ENCODE measurements at regions of chr1 and their contacts with region 1.

Region 1: GRCh38 chr1:43073490-43074230 is 98.4 kb downstream of the EBNA1BP2 start:
- DNase-seq: peak; percentile 85
- ATAC-seq: peak; percentile 86
- H3K4me3 ChIP-seq: no peak overlapping the region
- H3K4me3 Mint-ChIP-seq: peak overlapping the region; percentile 71
- H3K27ac ChIP-seq: peak overlapping the region in 1 of 2 donors; percentile 11
- H3K27ac Mint-ChIP-seq: peak overlapping the region; percentile 83
- H3K4me1 ChIP-seq: peaks cover 18 to 19% of the 10 kb centered on the region in 2 donors
- H3K4me1 Mint-ChIP-seq: peaks cover 37% of the 10 kb centered on the region
- H3K27me3 ChIP-seq: peaks cover 0 to 2% (median 0%) of the 10 kb centered on the region in 4 experiments
- H3K27me3 Mint-ChIP-seq: no peaks in the 10 kb centered on the region
- CTCF ChIP-seq: peak; percentile 90

Region 2: DNA sequence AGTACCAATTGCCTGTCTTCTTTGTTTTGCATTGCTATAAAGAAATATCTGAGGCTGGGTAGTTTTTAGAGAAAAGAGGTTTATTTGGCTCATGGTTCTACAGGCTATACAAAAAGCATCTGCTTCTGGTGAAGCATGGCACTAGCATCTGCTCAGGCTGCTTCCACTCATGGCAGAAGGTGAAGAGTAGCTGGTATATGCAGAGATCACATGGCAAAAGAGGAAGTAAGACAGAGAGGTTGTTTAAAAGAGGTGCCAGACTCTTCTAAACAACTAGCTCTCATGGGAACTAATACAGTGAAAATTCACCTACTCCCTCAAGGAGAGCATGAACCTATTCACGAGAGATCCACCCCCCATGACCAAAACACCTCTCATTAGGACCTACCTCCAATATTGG is 977.1 kb before region 1 on chr1:
- CTCF ChIA-PET with region 1: no interaction called
- POLR2A ChIA-PET with region 1: no interaction called
- intact Hi-C with region 1: no loop called
- DNase-seq: no peak
- ATAC-seq: no peak
- H3K4me3 ChIP-seq: no peak overlapping the region
- H3K4me3 Mint-ChIP-seq: no peak overlapping the region
- H3K27ac ChIP-seq: no peak overlapping the region
- H3K27ac Mint-ChIP-seq: no peak overlapping the region
- H3K4me1 ChIP-seq: no peaks in the 10 kb centered on the region
- H3K4me1 Mint-ChIP-seq: no peaks in the 10 kb centered on the region
- H3K27me3 ChIP-seq: peaks cover 0 to 8% (median 2%) of the 10 kb centered on the region in 4 experiments
- H3K27me3 Mint-ChIP-seq: peaks cover 39% of the 10 kb centered on the region
- CTCF ChIP-seq: no peak

Region 3: DNA sequence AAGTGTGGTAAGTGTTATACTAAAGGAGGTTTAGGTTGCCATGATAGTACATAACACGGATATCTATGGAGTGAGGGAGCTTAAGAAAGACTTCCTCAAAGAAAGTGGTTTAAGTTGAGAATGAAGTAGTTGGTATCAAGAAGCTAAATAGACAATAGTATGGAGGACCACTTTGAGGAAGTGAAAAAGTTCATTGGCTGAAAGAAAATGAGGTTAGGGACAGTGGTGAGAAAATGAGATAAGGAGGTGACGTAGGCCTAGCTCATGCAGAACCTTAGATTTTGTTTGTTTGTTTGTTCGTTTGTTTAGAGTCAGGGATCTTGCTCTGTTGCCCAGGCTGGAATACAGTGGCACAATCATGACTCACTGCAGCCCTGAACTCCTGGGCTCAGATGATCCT is 487.6 kb before region 1 on chr1:
- CTCF ChIA-PET with region 1: interaction called, 11 read pairs
- POLR2A ChIA-PET with region 1: no interaction called
- intact Hi-C with region 1: no loop called
- DNase-seq: peak; percentile 25
- ATAC-seq: no peak
- H3K4me3 ChIP-seq: no peak overlapping the region
- H3K4me3 Mint-ChIP-seq: no peak overlapping the region
- H3K27ac ChIP-seq: no peak overlapping the region
- H3K27ac Mint-ChIP-seq: no peak overlapping the region
- H3K4me1 ChIP-seq: no peaks in the 10 kb centered on the region
- H3K4me1 Mint-ChIP-seq: peaks cover 3% of the 10 kb centered on the region
- H3K27me3 ChIP-seq: no peaks in the 10 kb centered on the region
- H3K27me3 Mint-ChIP-seq: no peaks in the 10 kb centered on the region
- CTCF ChIP-seq: no peak

Region 4: DNA sequence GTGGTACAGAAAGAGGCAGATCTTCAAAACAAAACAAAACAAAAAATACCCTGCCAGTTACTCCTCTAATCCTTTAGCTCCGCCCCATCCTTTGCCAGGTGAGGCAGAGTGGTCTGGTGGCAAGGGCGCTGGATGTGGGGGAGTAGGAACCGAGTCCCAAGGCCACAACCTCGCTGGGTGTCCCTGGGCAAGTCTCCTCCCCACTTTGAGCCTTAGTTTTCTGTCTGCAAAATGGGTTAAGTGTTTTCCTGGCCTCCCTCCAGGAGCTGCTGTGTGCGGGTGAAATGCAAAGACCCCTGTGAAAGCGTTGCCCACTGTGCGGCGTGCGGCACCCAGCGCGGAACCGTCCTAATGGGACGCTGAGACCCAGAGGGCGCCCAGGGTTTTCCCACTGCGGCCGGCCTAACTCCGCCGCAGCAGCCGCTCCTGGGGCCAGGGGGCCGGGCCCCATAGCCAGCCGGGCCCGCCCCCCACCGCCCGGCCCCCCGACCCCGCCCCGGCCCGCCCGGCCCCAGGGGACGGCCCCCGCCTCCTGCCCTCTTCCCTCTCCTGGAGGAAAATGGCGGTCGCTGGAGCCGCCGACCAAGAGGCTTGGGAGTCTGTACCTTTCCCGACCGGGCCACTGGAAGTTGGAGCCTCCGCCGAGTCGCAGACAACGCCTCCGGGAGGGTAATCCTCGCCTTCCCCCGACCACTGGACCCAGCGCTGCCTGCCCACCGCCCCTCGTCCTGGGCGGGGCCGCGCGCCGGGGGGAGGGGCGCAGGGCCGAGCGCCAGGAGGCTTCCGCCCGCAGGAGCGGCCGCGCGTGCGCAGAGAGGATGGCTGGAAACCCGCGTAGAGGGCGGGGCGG is 256.9 kb before region 1 on chr1 and contains the starts of genes ERMAP and SVBP:
- CTCF ChIA-PET with region 1: interaction called, 8 read pairs
- POLR2A ChIA-PET with region 1: interaction called, 4 read pairs
- intact Hi-C with region 1: loop called (anchors 2 kb)
- DNase-seq: peak; percentile 97
- ATAC-seq: peak; percentile 86
- H3K4me3 ChIP-seq: peak within 1 kb of the TSS; percentile 57 to 82 (median 77)
- H3K4me3 Mint-ChIP-seq: peak within 1 kb of the TSS; percentile 89
- H3K27ac ChIP-seq: peak within 1 kb of the TSS; percentile 75 to 82
- H3K27ac Mint-ChIP-seq: peak within 1 kb of the TSS; percentile 92
- H3K4me1 ChIP-seq: peaks cover 13% of the 10 kb centered on the region in 2 donors
- H3K4me1 Mint-ChIP-seq: peaks cover 20% of the 10 kb centered on the region
- H3K27me3 ChIP-seq: no peaks in the 10 kb centered on the region
- H3K27me3 Mint-ChIP-seq: no peaks in the 10 kb centered on the region
- CTCF ChIP-seq: no peak
- total RNA-seq, gene ERMAP: 13.1 and 13.5 TPM in 2 replicates
- total RNA-seq, gene SVBP: 21.9 and 23.2 TPM in 2 replicates

Region 5: DNA sequence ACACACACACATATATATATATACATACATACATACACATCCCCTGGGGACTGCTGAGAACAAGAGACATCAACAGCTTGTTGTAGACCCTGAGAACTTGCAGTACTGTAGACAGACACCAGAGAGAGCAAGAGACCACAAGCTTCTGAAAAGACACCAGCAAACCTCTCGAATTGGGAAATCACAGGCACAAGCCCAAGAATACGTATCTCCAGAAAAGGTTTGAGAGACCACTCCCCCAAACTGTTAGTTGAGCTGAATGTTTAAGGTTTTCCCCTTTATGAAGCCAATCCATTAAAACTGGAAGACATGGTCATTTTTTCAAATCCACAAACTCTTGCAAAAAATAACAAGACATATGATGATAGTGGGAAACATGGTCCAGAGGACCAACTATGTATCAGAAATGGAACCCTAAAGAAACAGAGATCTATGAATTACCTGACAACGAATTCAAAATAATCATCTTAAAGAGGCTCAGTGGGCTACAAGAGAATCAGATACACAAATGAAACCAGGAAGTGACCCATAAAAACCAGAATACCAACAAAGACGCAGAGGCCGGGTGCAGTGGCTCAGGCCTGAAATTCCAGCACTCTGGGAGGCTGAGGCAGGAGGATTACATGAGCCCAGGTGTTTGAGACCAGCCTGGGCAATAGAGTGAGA is 160.1 kb before region 1 on chr1:
- CTCF ChIA-PET with region 1: interaction called, 1,178 read pairs
- POLR2A ChIA-PET with region 1: interaction called, 17 read pairs
- intact Hi-C with region 1: loop called (anchors 1 kb)
- DNase-seq: peak; percentile 86
- ATAC-seq: peak; percentile 98
- H3K4me3 ChIP-seq: no peak overlapping the region
- H3K4me3 Mint-ChIP-seq: no peak overlapping the region
- H3K27ac ChIP-seq: no peak overlapping the region
- H3K27ac Mint-ChIP-seq: peak overlapping the region; percentile 44
- H3K4me1 ChIP-seq: peaks cover 0 to 4% of the 10 kb centered on the region in 2 donors
- H3K4me1 Mint-ChIP-seq: peaks cover 5% of the 10 kb centered on the region
- H3K27me3 ChIP-seq: no peaks in the 10 kb centered on the region
- H3K27me3 Mint-ChIP-seq: peaks cover 5% of the 10 kb centered on the region
- CTCF ChIP-seq: peak; percentile 89

Region 6: DNA sequence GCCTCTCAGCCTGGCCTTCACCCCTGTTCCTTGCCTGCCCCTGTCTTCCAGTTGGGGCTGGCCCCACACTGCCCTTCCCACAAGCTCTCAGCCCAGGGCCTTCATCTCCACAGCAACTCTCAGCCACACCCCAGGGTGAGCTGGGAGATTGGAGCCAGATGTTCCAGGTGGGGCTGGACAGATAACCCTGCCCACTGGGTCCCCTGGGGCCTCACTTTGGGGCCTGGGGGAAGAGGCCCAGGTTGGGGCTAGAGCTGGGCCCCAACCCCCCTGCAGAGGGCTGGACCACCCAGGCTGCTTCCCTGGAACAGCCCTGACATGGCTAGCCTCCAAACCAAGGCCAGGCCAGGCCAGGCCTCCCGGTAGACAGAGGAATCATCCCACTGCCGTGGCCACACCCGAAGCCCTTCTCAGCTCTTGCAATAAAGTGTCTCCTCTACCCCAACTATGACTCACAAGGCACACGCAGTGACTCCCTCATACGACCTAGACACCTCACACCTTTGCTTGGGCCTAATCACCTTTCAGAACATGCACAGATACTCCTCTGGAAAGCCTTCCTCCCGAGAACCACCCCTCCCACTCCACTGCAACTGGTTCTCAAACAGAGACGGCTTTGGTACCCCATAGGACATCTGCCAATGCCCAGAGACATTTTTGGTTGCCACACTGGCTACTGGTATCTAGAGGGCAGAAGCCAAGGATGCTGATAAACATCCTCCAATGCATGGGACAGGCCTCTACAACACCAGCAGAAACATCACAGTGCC is 137.2 kb before region 1 on chr1:
- CTCF ChIA-PET with region 1: interaction called, 32 read pairs
- POLR2A ChIA-PET with region 1: interaction called, 9 read pairs
- intact Hi-C with region 1: no loop called
- DNase-seq: no peak
- ATAC-seq: no peak
- H3K4me3 ChIP-seq: no peak overlapping the region
- H3K4me3 Mint-ChIP-seq: peak overlapping the region; percentile 61
- H3K27ac ChIP-seq: peak overlapping the region; percentile 87 to 97
- H3K27ac Mint-ChIP-seq: peak overlapping the region; percentile 97
- H3K4me1 ChIP-seq: peaks cover 96 to 100% of the 10 kb centered on the region in 2 donors
- H3K4me1 Mint-ChIP-seq: peaks cover 98% of the 10 kb centered on the region
- H3K27me3 ChIP-seq: no peaks in the 10 kb centered on the region
- H3K27me3 Mint-ChIP-seq: no peaks in the 10 kb centered on the region
- CTCF ChIP-seq: no peak

Region 7: DNA sequence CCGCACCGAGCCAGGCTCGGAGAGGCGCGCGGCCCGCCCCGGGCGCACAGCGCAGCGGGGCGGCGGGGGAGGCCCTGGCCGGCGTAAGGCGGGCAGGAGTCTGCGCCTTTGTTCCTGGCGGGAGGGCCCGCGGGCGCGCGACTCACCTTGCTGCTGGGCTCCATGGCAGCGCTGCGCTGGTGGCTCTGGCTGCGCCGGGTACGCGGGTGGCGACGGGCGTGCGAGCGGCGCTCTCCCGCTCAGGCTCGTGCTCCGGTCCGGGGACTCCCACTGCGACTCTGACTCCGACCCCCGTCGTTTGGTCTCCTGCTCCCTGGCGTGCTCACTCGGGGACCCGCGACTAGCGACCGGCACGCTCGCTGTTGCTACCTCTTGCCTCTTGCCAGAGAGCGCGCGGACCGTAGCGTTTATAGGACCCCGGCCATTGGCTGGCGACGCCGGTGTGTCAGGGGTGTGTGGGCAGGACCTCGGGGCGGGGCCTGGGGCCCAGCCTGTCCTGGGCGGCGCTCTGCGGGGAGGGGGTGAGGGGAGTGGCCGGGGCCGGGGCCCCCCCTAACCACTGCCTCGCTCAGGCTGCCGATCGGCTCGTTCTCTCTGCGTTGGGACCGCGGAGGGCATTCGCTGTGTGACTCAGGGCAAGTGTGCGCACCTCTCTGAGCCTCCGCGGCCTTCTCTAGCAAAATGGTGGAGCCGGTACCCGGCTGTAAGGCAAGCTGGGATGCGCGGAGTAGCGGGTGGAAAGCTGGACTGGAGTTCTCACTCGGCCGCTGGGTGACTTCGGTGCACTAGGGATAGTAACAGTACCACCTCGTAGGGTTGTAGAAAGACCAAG is 115.0 kb before region 1 on chr1 and contains the start of gene SLC2A1:
- CTCF ChIA-PET with region 1: interaction called, 73 read pairs
- POLR2A ChIA-PET with region 1: interaction called, 7 read pairs
- intact Hi-C with region 1: loop called (anchors 1 kb)
- DNase-seq: peak; percentile 97
- ATAC-seq: peak; percentile 89
- H3K4me3 ChIP-seq: peak within 1 kb of the TSS; percentile 76 to 93 (median 87)
- H3K4me3 Mint-ChIP-seq: peak within 1 kb of the TSS; percentile 97
- H3K27ac ChIP-seq: peak within 1 kb of the TSS; percentile 59 to 86
- H3K27ac Mint-ChIP-seq: peak within 1 kb of the TSS; percentile 99
- H3K4me1 ChIP-seq: peaks cover 64 to 85% of the 10 kb centered on the region in 2 donors
- H3K4me1 Mint-ChIP-seq: peaks cover 73% of the 10 kb centered on the region
- H3K27me3 ChIP-seq: no peaks in the 10 kb centered on the region
- H3K27me3 Mint-ChIP-seq: no peaks in the 10 kb centered on the region
- CTCF ChIP-seq: no peak
- total RNA-seq, gene SLC2A1: 240 and 241 TPM in 2 replicates

Measured in B cell (primary cell).